HEK293 (cell line): ENCODE measurements at regions of chr1 and their contacts with region 1.

Region 1: DNA sequence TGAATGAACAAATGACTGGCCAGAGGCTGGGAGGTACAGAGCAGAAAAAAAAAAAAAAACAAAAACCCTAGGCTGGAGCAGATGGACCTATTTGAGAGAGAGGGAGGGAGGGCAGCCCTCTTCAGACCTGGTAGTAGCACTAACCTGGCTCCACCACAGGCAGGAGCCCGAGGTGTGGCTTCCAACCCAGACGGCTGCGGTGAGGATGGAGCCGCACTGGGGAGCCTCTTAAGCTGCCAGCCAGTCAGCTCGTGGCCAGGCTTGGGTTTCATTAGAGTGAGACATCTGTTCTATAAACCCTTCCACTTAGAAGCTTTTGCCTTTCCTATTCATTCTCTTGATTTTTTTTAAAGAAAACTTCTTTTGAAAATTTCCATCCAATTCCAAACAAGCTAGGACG is 16.8 kb downstream of the LGR6 start:
- H3K4me3 ChIP-seq: no peak overlapping the region
- H3K27ac ChIP-seq: no peak overlapping the region
- H3K4me1 ChIP-seq: no peaks in the 10 kb centered on the region
- CTCF ChIP-seq: peak; percentile 40; the same call in 1 of the 2 replicates

Region 2: DNA sequence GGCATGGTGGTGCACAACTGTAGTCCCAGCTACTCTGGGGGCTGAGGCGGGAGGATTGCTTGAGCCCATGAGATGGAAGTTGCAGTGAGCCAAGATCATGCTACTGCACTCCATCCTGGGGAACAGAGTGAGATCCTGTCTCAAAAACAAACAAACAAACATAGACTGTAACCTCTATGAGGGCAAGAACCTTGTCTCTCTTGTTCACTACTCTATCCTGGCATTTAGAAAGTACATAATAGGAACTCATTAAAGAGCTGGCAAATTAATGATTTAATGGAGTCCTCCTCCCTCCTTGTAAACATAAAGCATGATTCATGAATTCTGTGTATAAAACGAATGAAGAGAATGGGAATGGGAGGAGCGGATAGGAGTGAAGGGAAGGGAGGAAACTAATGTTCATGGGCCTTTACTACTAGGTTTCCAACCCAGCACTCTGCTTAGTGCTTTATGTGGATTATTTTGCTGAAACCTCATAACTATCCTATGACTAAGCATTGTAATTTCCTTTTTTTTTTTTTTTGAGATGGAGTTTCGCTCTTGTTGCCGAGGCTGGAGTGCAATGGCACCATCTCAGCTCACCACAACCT is 272.7 kb before region 1 on chr1:
- CTCF ChIA-PET with region 1: no interaction called
- POLR2A ChIA-PET with region 1: no interaction called
- H3K4me3 ChIP-seq: no peak overlapping the region
- H3K27ac ChIP-seq: no peak overlapping the region
- H3K4me1 ChIP-seq: no peaks in the 10 kb centered on the region
- CTCF ChIP-seq: no peak

Region 3: DNA sequence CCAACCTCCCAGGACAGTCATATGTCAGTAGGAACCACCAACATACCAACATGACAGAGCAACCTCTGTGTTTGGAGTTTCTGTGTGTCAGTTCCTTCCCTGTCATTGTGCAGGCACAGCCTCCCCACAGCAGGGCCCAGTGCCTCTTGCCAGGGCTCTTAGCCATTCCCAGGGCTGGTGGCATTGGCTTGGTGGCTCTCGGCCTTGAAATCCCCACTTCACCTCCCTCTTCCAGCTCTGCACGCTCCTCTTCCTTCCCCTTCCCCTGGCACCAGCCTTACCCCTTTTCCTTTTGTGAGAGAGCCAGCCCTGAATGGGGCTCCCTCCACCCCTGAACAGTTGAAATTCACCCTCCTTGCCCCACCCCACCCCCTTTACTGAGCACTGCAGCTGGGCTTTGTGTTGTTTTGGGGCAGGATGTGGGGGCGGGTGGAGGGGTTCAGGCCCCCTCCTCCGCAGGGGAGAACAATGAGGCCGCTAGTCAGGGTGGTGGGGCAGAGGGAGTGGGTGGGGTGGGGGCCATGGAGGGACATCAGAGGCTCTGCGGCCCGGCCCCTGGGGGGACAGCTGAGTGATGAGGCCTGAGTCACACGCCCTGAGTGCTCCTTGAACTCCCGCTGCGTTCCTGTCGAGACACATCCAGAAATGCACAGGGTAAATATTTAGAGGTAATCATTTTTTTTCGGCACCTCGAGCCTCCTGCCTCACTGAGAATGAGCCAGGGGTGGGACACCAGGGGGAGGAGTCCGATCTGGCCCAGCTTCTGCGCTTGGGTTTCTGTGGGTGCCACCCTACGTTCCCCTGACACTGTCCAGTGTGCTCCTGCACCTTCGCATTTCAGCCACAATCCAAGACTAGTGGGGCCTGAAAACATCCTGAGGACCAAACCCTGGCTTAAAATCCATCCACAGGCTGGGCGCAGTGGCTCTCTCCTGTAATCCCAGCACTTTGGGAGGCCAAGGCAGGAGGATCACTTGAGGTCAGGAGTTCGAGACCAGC is 11.8 kb after region 1 on chr1:
- CTCF ChIA-PET with region 1: interaction called, 28 read pairs
- POLR2A ChIA-PET with region 1: no interaction called
- H3K4me3 ChIP-seq: no peak overlapping the region
- H3K27ac ChIP-seq: peak overlapping the region; percentile 46; the same call in 1 of the 2 replicates
- H3K4me1 ChIP-seq: no peaks in the 10 kb centered on the region; the same call in 1 of the 2 replicates
- CTCF ChIP-seq: no peak